IMR-90 (cell line): ENCODE measurements at regions of chr18 and their contacts with region 1.

Region 1: GRCh38 chr18:3328532-3328931 is 66.6 kb downstream of the MYL12B start:
- DNase-seq: no peak
- ATAC-seq: no peak
- H3K4me3 ChIP-seq: no peak overlapping the region
- H3K27ac ChIP-seq: no peak overlapping the region
- H3K4me1 ChIP-seq: no peaks in the 10 kb centered on the region
- H3K27me3 ChIP-seq: no peaks in the 10 kb centered on the region
- CTCF ChIP-seq: no peak
- POLR2A ChIP-seq: no peak
- RAD21 ChIP-seq: no peak

Region 2: GRCh38 chr18:3350566-3351527 is 22.3 kb after region 1 on chr18:
- CTCF ChIA-PET with region 1: interaction called, 10 read pairs
- POLR2A ChIA-PET with region 1: no interaction called
- dilution Hi-C with region 1: no loop called
- in situ Hi-C with region 1: no loop called
- intact Hi-C with region 1: no loop called
- DNase-seq: peak; percentile 23
- ATAC-seq: no peak
- H3K4me3 ChIP-seq: no peak overlapping the region
- H3K27ac ChIP-seq: no peak overlapping the region
- H3K4me1 ChIP-seq: peaks cover 4% of the 10 kb centered on the region
- H3K27me3 ChIP-seq: no peaks in the 10 kb centered on the region
- CTCF ChIP-seq: no peak
- POLR2A ChIP-seq: no peak
- RAD21 ChIP-seq: no peak